ENCODE measurements at regions of chr16 and their contacts with region 1.

Region 1: GRCh38 chr16:50024684-50025536 is at the start of gene CNEP1R1:
- DNase-seq: peak; percentile 97
- ATAC-seq: peak; percentile 97
- H3K4me3 ChIP-seq: peak within 1 kb of the TSS; percentile 71 to 96 (median 85)
- H3K27ac ChIP-seq: peak within 1 kb of the TSS; percentile 56
- H3K4me1 ChIP-seq: peaks cover 44% of the 10 kb centered on the region
- H3K27me3 ChIP-seq: no peaks in the 10 kb centered on the region; a peak in 2 of 5 replicates
- CTCF ChIP-seq: peak; percentile 100
- EP300 ChIP-seq: peak; percentile 35 to 50; a peak in 2 of 4 replicates
- POLR2A ChIP-seq: peak; percentile 57 to 86
- RAD21 ChIP-seq: peak; percentile 100
- total RNA-seq, gene CNEP1R1: 22.9 and 23.6 TPM in 2 replicates

Region 2: DNA sequence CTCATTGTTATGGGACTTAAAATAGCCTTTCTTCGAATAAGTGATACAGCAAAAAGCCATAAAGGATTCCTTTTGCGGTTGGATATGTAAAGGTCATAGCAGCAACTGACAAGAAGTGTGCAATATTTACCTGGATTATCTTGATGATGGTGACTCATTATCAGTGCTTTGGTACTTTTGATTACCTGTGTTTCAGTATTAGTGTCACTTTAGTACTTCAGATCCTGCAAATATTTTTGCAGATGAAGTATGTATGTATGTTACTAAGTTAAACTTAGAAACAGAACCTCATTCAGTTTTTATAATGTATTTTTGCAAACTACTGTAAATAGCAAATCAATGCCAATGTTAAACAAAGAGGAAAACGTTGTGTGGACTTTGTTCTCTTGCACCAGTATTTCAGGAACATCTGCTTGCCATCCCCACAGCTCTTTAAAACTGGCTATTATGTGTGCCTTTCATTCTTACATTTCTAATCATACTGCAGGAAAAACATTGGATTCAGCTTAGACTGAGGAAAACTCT is 10.6 kb after region 1 on chr16:
- CTCF ChIA-PET with region 1: no interaction called
- POLR2A ChIA-PET with region 1: interaction called, 24 read pairs
- in situ Hi-C with region 1: no loop called
- intact Hi-C with region 1: loop called (anchors 1 kb)
- DNase-seq: peak; percentile 93
- ATAC-seq: peak; percentile 81
- H3K4me3 ChIP-seq: peak overlapping the region in 2 of 3 experiments; percentile 24 to 32; a peak in 1 of 6 replicates
- H3K27ac ChIP-seq: peak overlapping the region; percentile 81
- H3K4me1 ChIP-seq: peaks cover 69% of the 10 kb centered on the region
- H3K27me3 ChIP-seq: no peaks in the 10 kb centered on the region
- CTCF ChIP-seq: no peak
- EP300 ChIP-seq: peak in 1 of 2 experiments; percentile 87; a peak in 2 of 4 replicates
- POLR2A ChIP-seq: no peak
- RAD21 ChIP-seq: no peak

Region 3: DNA sequence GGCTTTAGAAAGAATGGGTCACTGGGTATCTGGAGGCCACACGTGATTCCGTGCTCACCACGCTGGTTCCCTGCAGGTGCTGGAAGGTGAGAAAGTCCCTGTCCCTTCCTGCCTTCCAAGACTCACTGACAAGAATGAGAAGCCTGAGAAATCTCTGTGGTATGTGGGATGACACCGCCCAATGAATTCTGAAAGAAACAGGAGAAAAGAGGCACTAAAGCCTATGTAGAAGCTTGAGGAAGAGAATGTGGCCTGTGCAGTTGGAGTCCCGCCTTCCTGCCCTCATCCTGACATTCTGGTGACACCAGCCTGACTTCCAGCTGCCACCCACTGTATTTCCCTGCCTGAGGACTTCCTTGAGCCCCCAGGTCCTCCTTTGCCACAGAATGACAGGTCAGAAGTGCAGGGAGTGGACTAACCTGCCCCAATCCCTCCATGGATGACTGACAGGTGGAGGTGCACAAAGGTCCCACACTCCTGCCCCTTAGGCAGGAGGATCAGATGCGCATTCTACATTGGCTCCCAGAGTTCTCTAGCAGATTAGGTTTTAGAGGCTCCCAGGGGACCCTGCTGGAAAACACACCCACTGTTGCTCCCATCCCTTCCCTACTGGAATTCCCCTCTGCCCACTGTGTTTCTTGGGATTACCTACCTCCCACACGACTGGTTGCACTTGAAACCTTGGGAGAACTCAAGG is 89.6 kb after region 1 on chr16:
- CTCF ChIA-PET with region 1: no interaction called
- POLR2A ChIA-PET with region 1: no interaction called
- in situ Hi-C with region 1: no loop called
- intact Hi-C with region 1: no loop called
- DNase-seq: no peak
- ATAC-seq: peak; percentile 56
- H3K4me3 ChIP-seq: no peak overlapping the region
- H3K27ac ChIP-seq: no peak overlapping the region
- H3K4me1 ChIP-seq: 0 out of 2 replicates have a peak, but pooled peaks cover 5% of the 10 kb centered on the region
- H3K27me3 ChIP-seq: no peaks in the 10 kb centered on the region
- CTCF ChIP-seq: no peak
- EP300 ChIP-seq: no peak
- POLR2A ChIP-seq: no peak
- RAD21 ChIP-seq: no peak

Region 4: DNA sequence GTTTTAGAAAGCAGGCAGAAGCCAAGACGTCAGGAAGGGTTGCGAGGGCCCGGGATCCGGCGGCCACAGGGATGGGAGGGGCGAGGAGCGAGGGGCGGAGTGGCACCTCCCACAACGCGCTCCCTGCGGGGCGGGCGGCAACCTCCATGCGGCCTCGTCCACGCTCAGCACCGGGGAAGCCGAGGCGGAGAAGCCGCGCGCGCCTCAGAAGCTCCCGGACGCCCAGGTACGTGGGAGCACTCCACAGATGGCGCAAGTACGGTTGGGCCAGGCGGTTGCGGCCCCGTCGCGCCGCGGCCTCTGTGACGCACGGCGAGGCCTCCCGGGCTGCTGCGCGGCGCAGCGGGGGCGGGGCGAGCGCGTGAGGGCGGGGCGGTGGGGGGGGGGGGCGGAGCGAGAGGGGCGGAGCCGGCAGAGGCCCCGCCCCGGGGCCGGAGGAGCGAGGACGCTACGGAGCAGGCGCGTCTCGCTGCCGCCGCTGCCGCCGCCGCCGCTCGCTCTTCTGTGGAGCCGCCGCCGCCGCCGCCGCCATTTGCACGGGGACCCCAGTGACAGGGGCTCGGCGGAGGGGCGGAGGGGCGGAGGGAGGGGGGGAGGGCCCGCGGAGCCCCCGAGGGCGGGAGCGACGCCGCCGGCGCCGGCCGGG is 128.0 kb after region 1 on chr16 and contains the start of gene TENT4B:
- CTCF ChIA-PET with region 1: no interaction called
- POLR2A ChIA-PET with region 1: interaction called, 13 read pairs
- in situ Hi-C with region 1: no loop called
- intact Hi-C with region 1: loop called (anchors 1 kb)
- DNase-seq: peak; percentile 62
- ATAC-seq: peak; percentile 68
- H3K4me3 ChIP-seq: peak within 1 kb of the TSS; percentile 98 to 100 (median 98)
- H3K27ac ChIP-seq: peak within 1 kb of the TSS; percentile 96
- H3K4me1 ChIP-seq: peaks cover 44% of the 10 kb centered on the region
- H3K27me3 ChIP-seq: no peaks in the 10 kb centered on the region; a peak in 1 of 5 replicates
- CTCF ChIP-seq: 0 out of 2 replicates have a peak, but pooled peaks have one; percentile 34
- EP300 ChIP-seq: no peak
- POLR2A ChIP-seq: peak; percentile 90 to 91
- RAD21 ChIP-seq: peak; percentile 57
- total RNA-seq, gene TENT4B: 32.8 and 36.0 TPM in 2 replicates

Region 5: DNA sequence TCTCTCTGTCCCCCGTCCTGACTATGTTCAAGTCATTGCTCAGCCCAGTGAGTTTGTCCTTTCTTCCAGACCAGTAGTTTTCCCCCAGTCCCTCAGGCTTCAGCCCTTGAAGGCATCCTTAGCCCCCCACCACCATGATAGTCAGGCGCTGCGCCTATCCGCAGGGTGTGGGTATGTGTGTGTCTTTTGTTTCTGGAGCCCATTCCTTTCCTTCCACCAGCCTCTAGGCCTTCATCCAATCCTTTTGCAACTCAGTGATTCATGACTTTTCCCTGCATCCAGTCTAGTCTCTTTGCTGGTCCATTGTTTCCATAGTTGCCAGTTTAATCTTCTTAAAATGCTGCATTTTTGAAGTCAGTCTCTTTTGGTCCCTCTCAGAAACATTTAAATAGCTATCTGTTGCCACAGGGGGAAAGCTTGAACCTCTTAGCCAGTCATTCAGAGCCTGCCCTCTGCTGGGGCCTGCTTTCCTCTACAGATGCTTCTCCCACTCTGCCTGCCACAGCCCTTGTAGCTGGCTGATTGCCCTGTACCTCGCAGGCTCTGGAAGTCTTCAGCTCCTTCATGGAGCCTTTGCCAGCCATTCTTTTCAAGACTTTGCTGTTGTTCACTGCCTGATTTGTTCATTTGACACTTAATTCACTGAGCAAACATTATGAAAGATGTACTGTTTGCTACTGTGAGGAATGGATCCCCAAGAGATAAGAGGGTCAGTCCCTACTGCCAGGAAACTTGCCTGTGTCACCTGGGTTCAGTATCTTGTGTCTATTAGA is 185.5 kb after region 1 on chr16:
- CTCF ChIA-PET with region 1: interaction called, 8 read pairs
- POLR2A ChIA-PET with region 1: interaction called, 15 read pairs
- in situ Hi-C with region 1: loop called (anchors 5 kb)
- intact Hi-C with region 1: loop called (anchors 1 kb)
- DNase-seq: peak; percentile 77
- ATAC-seq: peak; percentile 98
- H3K4me3 ChIP-seq: no peak overlapping the region
- H3K27ac ChIP-seq: no peak overlapping the region
- H3K4me1 ChIP-seq: peaks cover 40% of the 10 kb centered on the region
- H3K27me3 ChIP-seq: no peaks in the 10 kb centered on the region
- CTCF ChIP-seq: peak; percentile 94
- EP300 ChIP-seq: no peak
- POLR2A ChIP-seq: no peak
- RAD21 ChIP-seq: peak; percentile 92

Region 6: DNA sequence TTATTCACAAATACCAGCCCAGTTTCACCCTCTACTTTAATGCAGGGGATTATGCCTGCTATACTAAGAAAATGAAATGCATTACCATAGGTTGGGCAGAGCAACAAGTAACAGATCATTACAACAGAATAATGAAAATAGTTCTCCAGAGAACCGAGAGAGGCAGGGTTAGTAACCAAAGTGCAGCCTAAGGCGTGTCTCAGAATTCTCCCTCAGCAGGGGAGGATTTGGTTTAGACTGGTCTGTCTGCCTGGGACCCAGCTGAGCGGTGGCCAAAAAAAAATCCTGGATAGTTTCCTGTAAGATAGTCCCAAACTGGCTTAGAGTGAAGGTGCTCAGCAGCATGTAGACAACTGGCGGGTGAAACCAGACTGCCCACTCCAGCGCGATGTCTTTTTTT is 210.7 kb after region 1 on chr16:
- CTCF ChIA-PET with region 1: no interaction called
- POLR2A ChIA-PET with region 1: no interaction called
- in situ Hi-C with region 1: no loop called
- intact Hi-C with region 1: no loop called
- DNase-seq: no peak
- ATAC-seq: peak; percentile 33; the same call in 2 of the 3 replicates
- H3K4me3 ChIP-seq: no peak overlapping the region
- H3K27ac ChIP-seq: no peak overlapping the region
- H3K4me1 ChIP-seq: no peaks in the 10 kb centered on the region
- H3K27me3 ChIP-seq: no peaks in the 10 kb centered on the region
- CTCF ChIP-seq: no peak
- EP300 ChIP-seq: no peak
- POLR2A ChIP-seq: no peak
- RAD21 ChIP-seq: no peak